B cell (primary cell): ENCODE measurements at regions of chr2 and their contacts with region 1.

Region 1: GRCh38 chr2:174748948-174749347 is 15.3 kb downstream of the CHRNA1 start:
- DNase-seq: peak; percentile 79
- ATAC-seq: peak; percentile 26
- H3K4me3 ChIP-seq: no peak overlapping the region
- H3K4me3 Mint-ChIP-seq: peak overlapping the region; percentile 10
- H3K27ac ChIP-seq: peak overlapping the region in 1 of 2 donors; percentile 79
- H3K27ac Mint-ChIP-seq: peak overlapping the region; percentile 23
- H3K4me1 ChIP-seq: peaks cover 44 to 48% of the 10 kb centered on the region in 2 donors
- H3K4me1 Mint-ChIP-seq: peaks cover 42% of the 10 kb centered on the region
- H3K27me3 ChIP-seq: peaks cover 0 to 6% (median 0%) of the 10 kb centered on the region in 4 experiments
- H3K27me3 Mint-ChIP-seq: peaks cover 3% of the 10 kb centered on the region
- CTCF ChIP-seq: peak; percentile 89

Region 2: DNA sequence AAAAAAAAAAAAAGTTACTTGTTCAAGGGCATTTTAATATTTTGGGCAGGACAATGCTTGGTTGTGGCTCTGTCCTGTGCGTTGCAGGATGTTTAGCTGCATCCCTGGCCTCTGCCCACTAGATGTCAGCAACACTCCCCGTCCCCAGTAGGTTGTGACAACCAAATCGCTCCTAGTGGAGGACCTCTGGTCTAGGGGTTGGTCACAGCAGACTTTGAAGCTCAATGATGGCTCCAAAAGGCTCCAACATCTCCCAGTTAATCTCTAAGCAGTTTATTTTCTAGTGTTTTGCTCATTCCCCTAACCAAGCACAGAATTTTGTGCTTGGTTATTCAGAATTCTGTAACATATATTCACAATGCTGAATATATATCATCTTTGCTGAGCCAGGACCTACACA is 51.7 kb before region 1 on chr2:
- CTCF ChIA-PET with region 1: interaction called, 34 read pairs
- POLR2A ChIA-PET with region 1: no interaction called
- intact Hi-C with region 1: loop called (anchors 5 kb)
- DNase-seq: peak; percentile 73
- ATAC-seq: peak; percentile 92
- H3K4me3 ChIP-seq: no peak overlapping the region
- H3K4me3 Mint-ChIP-seq: no peak overlapping the region
- H3K27ac ChIP-seq: no peak overlapping the region
- H3K27ac Mint-ChIP-seq: no peak overlapping the region
- H3K4me1 ChIP-seq: no peaks in the 10 kb centered on the region
- H3K4me1 Mint-ChIP-seq: no peaks in the 10 kb centered on the region
- H3K27me3 ChIP-seq: peaks cover 0 to 18% (median 0%) of the 10 kb centered on the region in 4 experiments
- H3K27me3 Mint-ChIP-seq: peaks cover 16% of the 10 kb centered on the region
- CTCF ChIP-seq: peak; percentile 84

Region 3: GRCh38 chr2:174771631-174772471 is 22.9 kb after region 1 on chr2:
- CTCF ChIA-PET with region 1: interaction called, 59 read pairs
- POLR2A ChIA-PET with region 1: no interaction called
- intact Hi-C with region 1: no loop called
- DNase-seq: no peak
- ATAC-seq: peak; percentile 24
- H3K4me3 ChIP-seq: no peak overlapping the region
- H3K4me3 Mint-ChIP-seq: no peak overlapping the region
- H3K27ac ChIP-seq: no peak overlapping the region
- H3K27ac Mint-ChIP-seq: no peak overlapping the region
- H3K4me1 ChIP-seq: peaks cover 0 to 3% of the 10 kb centered on the region in 2 donors
- H3K4me1 Mint-ChIP-seq: peaks cover 11% of the 10 kb centered on the region
- H3K27me3 ChIP-seq: peaks cover 0 to 5% (median 2%) of the 10 kb centered on the region in 4 experiments
- H3K27me3 Mint-ChIP-seq: peaks cover 16% of the 10 kb centered on the region
- CTCF ChIP-seq: peak; percentile 18

Region 4: GRCh38 chr2:175167792-175168563 is 419.0 kb after region 1 on chr2 and contains the start of gene ATF2:
- CTCF ChIA-PET with region 1: no interaction called
- POLR2A ChIA-PET with region 1: no interaction called
- intact Hi-C with region 1: loop called (anchors 5 kb)
- DNase-seq: peak; percentile 99
- ATAC-seq: peak; percentile 91
- H3K4me3 ChIP-seq: peak within 1 kb of the TSS; percentile 93 to 98 (median 97)
- H3K4me3 Mint-ChIP-seq: peak within 1 kb of the TSS; percentile 99
- H3K27ac ChIP-seq: peak within 1 kb of the TSS; percentile 86 to 91
- H3K27ac Mint-ChIP-seq: peak within 1 kb of the TSS; percentile 93
- H3K4me1 ChIP-seq: peaks cover 5 to 21% of the 10 kb centered on the region in 2 donors
- H3K4me1 Mint-ChIP-seq: peaks cover 33% of the 10 kb centered on the region
- H3K27me3 ChIP-seq: no peaks in the 10 kb centered on the region
- H3K27me3 Mint-ChIP-seq: no peaks in the 10 kb centered on the region
- CTCF ChIP-seq: no peak
- total RNA-seq, gene ATF2: 66.8 and 69.9 TPM in 2 replicates